Prostate gland (tissue), 2 donors: ENCODE measurements at regions of chr1 and their contacts with region 1.

Region 1: DNA sequence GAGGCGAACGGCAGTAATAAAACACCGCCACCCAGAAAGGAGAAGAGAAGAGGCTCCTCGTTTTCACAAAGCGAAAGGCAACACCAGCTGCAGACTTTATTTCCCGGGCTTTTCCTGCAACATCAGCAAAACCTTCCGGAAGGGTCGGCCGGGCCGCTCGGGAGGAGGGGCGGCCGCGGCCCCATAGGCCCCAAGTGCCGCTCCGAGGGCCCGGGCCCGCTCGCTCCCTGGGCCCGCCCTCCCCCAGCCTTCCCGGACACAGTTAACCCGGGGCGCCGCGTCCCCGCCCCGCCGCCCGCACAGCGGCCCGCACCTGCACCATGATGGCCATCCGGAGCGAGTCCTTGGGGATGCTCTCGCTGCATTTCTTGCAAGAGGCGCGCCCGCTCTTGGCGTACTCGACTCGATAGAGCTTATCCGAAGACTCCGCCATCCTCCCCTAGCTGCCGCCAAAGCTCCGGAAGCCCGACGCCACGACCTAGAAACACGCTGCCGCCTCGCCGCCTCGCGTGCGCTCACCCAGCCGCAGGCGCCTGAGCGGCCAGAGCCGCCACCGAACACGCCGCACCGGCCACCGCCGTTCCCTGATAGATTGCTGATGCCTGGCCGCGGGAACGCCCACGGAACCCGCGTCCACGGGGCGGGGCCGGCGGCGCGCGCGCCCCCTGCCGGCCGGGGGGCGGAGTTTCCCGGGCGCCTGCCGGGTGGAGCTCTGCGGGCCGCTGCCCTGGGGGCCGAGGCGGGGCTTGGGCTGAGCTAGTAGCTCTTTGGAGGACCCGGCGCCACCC is at the start of gene PARP1:
- DNase-seq: peak; percentile 87
- H3K4me3 ChIP-seq: peak within 1 kb of the TSS; percentile 77 to 79
- H3K27ac ChIP-seq: peak within 1 kb of the TSS; percentile 84 to 89
- H3K4me1 ChIP-seq: peaks cover 12% of the 10 kb centered on the region
- H3K27me3 ChIP-seq: no peaks in the 10 kb centered on the region
- CTCF ChIP-seq: peak; percentile 92 to 96 (median 94)
- POLR2A ChIP-seq: peak; percentile 89
- total RNA-seq, gene PARP1: 197 to 212 TPM

Region 2: GRCh38 chr1:226186124-226187018 is 221.3 kb before region 1 on chr1 and contains the start of gene ACBD3:
- intact Hi-C with region 1: loop called (anchors 10 kb)
- DNase-seq: peak; percentile 81
- H3K4me3 ChIP-seq: peak within 1 kb of the TSS; percentile 86 to 94
- H3K27ac ChIP-seq: peak within 1 kb of the TSS; percentile 88 to 94
- H3K4me1 ChIP-seq: no peaks in the 10 kb centered on the region
- H3K27me3 ChIP-seq: no peaks in the 10 kb centered on the region
- CTCF ChIP-seq: peak in 2 of 4 experiments; percentile 17 to 32
- POLR2A ChIP-seq: peak; percentile 85
- total RNA-seq, gene ACBD3: 42.0 to 46.7 TPM

Region 3: DNA sequence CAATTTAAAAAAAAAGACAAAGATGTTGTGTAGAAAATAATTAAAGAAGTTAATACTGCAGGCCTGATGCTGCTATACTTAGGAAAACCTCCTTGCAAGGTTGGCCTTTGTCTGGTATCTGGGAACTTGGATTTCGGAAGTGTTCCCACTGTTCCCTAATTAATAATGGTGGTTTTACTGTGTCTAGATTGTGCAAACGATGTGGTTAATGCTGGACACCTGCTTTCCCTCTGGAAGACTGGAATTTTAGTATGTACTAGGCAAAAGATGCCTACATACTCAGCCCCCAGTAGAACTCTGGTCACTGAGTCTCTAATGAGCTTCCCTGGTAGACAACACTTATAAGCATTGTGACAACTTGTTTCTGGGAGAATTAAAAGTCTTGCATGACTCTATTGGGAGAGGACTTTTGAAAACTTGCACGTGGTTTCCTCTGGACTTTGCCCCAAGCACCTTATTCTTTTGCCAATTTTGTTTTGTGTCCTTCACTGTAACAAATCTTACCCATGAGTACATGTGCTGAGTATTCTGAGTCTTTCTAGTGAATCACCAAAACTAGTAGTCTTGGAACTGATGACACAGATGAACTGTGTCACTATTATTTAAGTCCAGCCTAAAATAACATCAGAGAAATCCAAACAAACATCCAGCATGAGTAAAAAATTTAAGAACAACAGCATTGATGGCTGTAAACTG is 139.1 kb before region 1 on chr1:
- intact Hi-C with region 1: no loop called
- DNase-seq: no peak
- H3K4me3 ChIP-seq: no peak overlapping the region
- H3K27ac ChIP-seq: no peak overlapping the region
- H3K4me1 ChIP-seq: no peaks in the 10 kb centered on the region
- H3K27me3 ChIP-seq: no peaks in the 10 kb centered on the region
- CTCF ChIP-seq: no peak
- POLR2A ChIP-seq: no peak

Region 4: DNA sequence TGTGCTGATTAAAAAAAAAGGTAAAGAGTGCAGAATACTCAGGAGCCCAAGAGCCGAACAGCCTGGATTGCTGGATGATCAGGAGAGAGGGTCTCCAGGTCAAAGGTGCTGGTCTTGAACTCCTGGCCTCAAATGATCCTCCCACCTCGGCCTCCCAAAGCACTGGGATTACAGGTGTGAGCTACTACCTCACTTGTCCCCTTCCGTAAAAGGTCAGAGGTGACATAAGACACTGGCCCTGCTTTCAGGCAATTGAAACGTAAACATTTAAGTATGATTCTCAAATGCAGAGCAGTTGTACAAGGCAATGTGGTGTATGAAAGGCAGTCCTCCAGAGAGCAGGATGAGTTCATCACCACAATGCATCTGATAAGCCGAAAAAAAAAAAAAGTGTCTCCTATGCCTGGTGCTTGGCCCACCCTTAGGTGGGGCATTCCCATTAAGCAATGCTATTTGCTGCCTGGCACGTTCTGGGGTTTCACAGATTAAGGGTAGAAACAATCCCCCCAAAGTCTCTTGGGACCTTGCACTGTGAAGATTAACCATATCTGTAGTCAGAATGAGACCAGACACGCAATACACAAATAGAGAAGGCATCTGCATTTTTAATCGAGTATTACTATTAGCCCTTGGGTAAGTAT is 47.5 kb before region 1 on chr1:
- intact Hi-C with region 1: loop called (anchors 5 kb)
- DNase-seq: no peak
- H3K4me3 ChIP-seq: no peak overlapping the region
- H3K27ac ChIP-seq: no peak overlapping the region
- H3K4me1 ChIP-seq: no peaks in the 10 kb centered on the region
- H3K27me3 ChIP-seq: no peaks in the 10 kb centered on the region
- CTCF ChIP-seq: no peak
- POLR2A ChIP-seq: no peak